Endothelial cell of umbilical vein (primary cell): ENCODE measurements at regions of chr12 and their contacts with region 1.

Region 1: GRCh38 chr12:52884526-52885293 is 20.2 kb downstream of the KRT8 start:
- DNase-seq: peak; percentile 60
- H3K4me3 ChIP-seq: no peak overlapping the region
- H3K27ac ChIP-seq: no peak overlapping the region
- H3K4me1 ChIP-seq: no peaks in the 10 kb centered on the region
- H3K27me3 ChIP-seq: no peaks in the 10 kb centered on the region
- CTCF ChIP-seq: peak; percentile 89 to 92
- POLR2A ChIP-seq: no peak

Region 2: DNA sequence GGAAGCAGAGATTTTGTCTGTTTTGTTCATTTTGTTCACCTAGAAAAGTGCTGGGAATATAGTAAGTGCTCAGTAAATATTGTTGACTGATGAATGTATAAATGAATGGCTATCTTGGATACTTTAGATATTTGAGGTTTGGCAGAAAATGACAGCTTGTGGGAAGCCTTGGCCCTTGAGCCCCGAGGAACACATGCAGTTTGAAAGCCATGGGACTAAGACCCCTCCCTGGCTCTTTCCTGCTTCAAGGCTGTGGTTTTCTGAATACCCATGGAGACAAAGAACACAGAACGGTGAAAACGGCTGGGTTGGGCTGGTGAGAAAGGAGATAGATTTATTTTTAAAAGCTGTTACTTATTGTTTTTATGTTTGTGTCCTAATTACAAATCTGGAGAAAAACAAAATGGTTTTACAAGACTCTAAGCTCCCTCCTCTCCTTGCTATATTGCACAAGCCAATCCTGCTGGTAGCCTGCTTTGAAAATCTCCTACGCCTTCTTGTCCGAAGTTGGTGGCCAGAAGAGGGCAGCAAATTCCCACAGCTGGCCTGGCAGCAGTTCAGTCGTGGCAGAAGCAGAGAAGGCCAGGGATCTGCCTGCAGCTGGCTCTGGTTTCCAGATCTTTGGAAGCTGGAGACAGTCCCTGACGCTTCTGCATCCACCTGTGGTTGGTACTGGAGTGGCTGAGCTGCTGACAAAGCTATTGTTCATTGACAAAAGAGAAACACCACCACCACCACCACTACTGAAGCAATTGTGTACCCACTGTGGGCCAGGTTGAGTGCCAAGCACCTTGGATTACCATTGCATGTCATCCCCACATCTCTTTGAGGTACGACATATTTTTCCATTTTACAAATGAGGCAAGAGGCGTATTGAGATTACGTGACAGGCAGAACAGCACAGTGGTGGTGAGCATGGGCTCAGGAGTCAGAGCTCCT is 512.2 kb before region 1 on chr12:
- CTCF ChIA-PET with region 1: interaction called, 126 read pairs
- POLR2A ChIA-PET with region 1: no interaction called
- dilution Hi-C with region 1: no loop called
- intact Hi-C with region 1: loop called (anchors 1 kb)
- DNase-seq: peak; percentile 73
- H3K4me3 ChIP-seq: no peak overlapping the region
- H3K27ac ChIP-seq: no peak overlapping the region
- H3K4me1 ChIP-seq: no peaks in the 10 kb centered on the region
- H3K27me3 ChIP-seq: peaks cover 13 to 19% of the 10 kb centered on the region in 2 experiments
- CTCF ChIP-seq: peak; percentile 69 to 77
- POLR2A ChIP-seq: no peak

Region 3: DNA sequence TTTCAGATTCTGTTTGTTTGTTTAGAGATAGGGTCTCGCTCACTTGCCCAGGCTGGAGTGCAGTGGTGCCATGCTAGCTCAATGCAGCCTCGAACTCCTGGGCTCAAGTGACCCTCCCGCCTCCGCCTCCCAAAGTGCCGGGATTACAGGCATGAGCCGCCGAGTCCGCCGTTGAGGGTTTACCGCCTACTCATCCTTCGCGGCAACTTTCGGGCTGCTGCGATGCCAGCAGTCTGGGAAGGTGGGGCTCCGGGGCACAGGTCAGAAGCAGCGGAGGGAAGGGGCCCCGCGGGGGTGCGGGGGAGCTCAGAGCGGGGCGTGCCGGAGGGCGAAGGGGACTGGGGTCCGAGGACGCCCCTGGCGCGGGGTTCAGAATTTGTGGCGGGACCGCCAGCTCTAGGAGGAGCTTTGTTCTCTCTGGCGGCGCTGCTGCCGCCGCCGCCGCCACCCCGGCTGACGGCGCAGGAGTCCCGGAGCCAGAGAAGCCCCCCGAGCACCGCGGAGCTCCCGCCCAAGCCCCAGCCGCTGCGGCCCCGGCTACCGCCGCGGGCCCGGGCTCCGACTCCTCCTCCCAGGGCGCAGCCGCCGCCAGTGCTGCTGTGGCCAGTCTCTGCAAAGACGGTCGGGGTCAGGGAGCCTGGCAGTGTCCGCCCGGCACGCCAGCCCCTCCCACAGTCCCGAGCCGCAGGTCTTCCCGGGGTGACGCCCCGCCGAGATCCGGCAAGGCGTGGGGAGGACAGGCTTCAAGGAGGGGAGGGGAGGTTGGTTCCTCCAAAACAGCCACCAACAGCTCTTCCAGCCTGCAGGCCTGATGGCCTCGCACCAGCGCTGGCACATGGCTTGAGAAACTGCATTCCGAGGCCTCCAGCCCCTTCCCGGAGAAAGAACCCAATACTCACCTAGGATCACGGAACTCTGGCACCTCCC is 170.5 kb before region 1 on chr12:
- CTCF ChIA-PET with region 1: no interaction called
- POLR2A ChIA-PET with region 1: no interaction called
- dilution Hi-C with region 1: no loop called
- intact Hi-C with region 1: no loop called
- DNase-seq: no peak
- H3K4me3 ChIP-seq: no peak overlapping the region
- H3K27ac ChIP-seq: no peak overlapping the region
- H3K4me1 ChIP-seq: no peaks in the 10 kb centered on the region
- H3K27me3 ChIP-seq: peaks cover 24 to 30% of the 10 kb centered on the region in 2 experiments
- CTCF ChIP-seq: no peak
- POLR2A ChIP-seq: no peak

Region 4: DNA sequence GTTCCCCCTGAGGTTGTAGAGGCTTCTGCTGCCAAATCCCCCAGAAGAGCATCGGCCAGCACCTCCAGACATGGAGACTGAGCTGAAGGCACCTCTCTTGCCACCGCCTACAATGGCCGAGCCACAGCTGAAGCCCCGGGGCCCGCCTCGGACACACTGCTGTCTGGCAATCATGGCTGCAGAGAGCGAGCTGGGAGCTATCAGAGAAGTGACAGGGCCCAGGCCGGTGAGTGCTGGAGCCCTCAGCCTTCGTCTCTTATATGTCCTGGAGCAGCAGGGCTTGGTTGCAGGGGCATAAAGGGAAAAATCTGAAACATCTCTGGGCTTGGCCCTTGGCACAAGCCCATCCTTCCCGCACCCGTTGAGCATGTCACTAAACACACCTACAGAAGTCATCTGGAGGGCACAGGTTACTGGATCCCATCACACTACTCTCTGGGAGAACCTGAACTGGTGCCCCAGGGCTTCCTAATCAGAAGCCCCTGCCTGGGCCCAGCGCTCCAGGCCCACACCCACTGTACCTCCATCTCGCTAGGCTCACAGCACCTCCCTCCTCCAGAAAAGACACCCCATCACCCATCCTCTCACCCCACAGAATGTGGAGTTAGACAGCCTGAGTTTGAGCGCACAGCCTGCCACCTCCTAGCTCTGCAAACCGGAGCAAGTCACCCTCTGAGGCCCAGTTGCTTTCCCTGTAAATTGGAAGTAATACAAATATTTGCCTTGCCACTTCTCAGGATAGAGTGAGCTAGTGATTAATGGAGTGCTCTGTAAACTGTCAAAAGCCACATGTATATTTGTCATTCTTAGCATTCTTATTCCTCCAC is 70.6 kb before region 1 on chr12 and contains the start of gene KRT4:
- CTCF ChIA-PET with region 1: no interaction called
- POLR2A ChIA-PET with region 1: no interaction called
- dilution Hi-C with region 1: no loop called
- intact Hi-C with region 1: no loop called
- DNase-seq: no peak
- H3K4me3 ChIP-seq: no peak within 1 kb of the TSS
- H3K27ac ChIP-seq: no peak within 1 kb of the TSS
- H3K4me1 ChIP-seq: no peaks in the 10 kb centered on the region
- H3K27me3 ChIP-seq: no peaks in the 10 kb centered on the region
- CTCF ChIP-seq: no peak
- POLR2A ChIP-seq: no peak
- total RNA-seq, gene KRT4: not detected in 2 replicates

Region 5: DNA sequence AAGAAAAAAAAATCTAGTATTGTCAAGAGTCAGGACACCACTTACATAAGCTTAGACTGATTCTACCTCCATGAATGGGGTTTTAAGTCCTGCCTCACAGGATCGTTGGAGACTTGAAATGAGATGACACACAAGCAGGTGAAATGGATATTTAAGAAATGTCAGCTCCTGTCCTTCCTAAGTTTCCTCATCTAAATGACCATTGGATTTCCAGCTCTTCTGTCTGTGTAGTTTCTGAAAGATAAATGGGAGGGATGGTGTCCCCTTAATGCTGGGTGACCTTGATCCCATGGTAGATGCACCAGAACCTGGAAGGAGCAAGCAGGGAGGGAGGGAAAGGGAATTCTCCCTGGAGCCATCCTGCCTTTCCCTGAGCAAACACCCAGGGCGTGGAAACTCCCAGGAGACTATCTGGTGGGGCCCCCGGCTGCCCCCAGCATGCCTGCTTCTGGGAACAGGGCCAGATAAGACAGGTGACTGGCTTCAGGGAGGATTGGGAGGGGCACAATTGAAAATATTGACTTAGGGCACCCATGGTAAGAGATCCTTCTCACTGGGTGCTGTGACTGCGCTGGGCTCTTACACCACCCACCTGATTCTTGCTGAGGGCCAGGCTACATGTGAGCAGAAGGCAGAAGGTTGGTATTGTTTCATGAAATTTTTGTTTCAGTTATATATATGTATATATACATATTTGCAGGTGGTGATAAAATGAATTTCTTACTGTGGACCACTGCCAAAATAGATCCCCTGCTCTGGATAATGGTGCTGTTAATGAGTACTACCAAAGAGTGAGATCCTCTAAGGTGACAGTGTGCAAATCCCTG is 10.6 kb after region 1 on chr12:
- CTCF ChIA-PET with region 1: interaction called, 72 read pairs
- POLR2A ChIA-PET with region 1: no interaction called
- dilution Hi-C with region 1: no loop called
- intact Hi-C with region 1: no loop called
- DNase-seq: no peak
- H3K4me3 ChIP-seq: no peak overlapping the region
- H3K27ac ChIP-seq: no peak overlapping the region
- H3K4me1 ChIP-seq: no peaks in the 10 kb centered on the region
- H3K27me3 ChIP-seq: no peaks in the 10 kb centered on the region
- CTCF ChIP-seq: no peak
- POLR2A ChIP-seq: no peak

Region 6: GRCh38 chr12:52924764-52925716 is 40.3 kb after region 1 on chr12:
- CTCF ChIA-PET with region 1: interaction called, 54 read pairs
- POLR2A ChIA-PET with region 1: interaction called, 3 read pairs
- dilution Hi-C with region 1: no loop called
- intact Hi-C with region 1: loop called (anchors 1 kb)
- DNase-seq: peak; percentile 91
- H3K4me3 ChIP-seq: no peak overlapping the region
- H3K27ac ChIP-seq: peak overlapping the region; percentile 96
- H3K4me1 ChIP-seq: peaks cover 42% of the 10 kb centered on the region
- H3K27me3 ChIP-seq: no peaks in the 10 kb centered on the region
- CTCF ChIP-seq: no peak
- POLR2A ChIP-seq: peak; percentile 76

Region 7: GRCh38 chr12:52949413-52950331 is 65.0 kb after region 1 on chr12:
- CTCF ChIA-PET with region 1: interaction called, 76 read pairs
- POLR2A ChIA-PET with region 1: no interaction called
- dilution Hi-C with region 1: no loop called
- intact Hi-C with region 1: loop called (anchors 1 kb)
- DNase-seq: peak; percentile 96
- H3K4me3 ChIP-seq: peak overlapping the region; percentile 67 to 93 (median 74)
- H3K27ac ChIP-seq: peak overlapping the region; percentile 91
- H3K4me1 ChIP-seq: peaks cover 37% of the 10 kb centered on the region
- H3K27me3 ChIP-seq: no peaks in the 10 kb centered on the region
- CTCF ChIP-seq: no peak
- POLR2A ChIP-seq: no peak

Region 8: DNA sequence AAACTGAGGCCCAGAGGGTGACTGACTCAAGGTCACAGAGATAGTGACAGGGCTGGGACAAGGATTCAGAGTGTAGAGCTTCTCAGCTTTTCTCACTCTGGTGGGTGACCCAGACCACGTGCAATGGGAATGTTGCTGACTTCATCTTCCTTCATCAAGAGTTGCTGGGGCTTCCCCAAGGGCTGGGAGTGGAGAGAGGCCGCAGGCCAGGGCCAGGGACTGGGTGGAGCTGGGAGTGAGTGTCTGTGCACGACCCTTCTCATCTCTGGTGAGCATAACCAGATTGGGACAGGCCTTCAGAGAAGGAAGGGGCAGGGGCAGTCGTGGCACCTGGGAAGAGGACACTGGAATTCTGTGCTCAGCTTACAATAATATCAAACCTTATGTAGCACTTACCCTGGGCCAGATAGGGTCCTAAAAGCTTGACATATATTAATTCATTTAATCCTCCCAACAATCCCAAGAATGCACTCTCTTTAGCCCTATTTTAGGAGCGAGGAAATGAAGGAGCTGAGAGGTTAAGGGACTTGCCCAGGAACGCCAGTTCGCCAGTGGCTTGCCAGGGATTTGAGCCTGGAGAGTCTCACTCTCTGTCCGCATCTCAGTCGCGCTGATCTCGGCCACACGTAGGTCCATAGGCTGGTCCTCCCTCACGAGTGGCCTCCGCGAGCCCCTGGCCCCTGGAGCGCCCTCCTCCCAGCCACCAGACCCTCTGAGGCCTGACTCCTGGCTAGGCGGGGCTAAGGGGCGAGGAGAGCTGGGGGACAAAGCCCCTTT is 80.0 kb after region 1 on chr12:
- CTCF ChIA-PET with region 1: interaction called, 23 read pairs
- POLR2A ChIA-PET with region 1: no interaction called
- dilution Hi-C with region 1: no loop called
- intact Hi-C with region 1: no loop called
- DNase-seq: no peak
- H3K4me3 ChIP-seq: peak overlapping the region in 1 of 3 experiments; percentile 20
- H3K27ac ChIP-seq: no peak overlapping the region
- H3K4me1 ChIP-seq: no peaks in the 10 kb centered on the region
- H3K27me3 ChIP-seq: no peaks in the 10 kb centered on the region
- CTCF ChIP-seq: no peak
- POLR2A ChIP-seq: no peak

Region 9: DNA sequence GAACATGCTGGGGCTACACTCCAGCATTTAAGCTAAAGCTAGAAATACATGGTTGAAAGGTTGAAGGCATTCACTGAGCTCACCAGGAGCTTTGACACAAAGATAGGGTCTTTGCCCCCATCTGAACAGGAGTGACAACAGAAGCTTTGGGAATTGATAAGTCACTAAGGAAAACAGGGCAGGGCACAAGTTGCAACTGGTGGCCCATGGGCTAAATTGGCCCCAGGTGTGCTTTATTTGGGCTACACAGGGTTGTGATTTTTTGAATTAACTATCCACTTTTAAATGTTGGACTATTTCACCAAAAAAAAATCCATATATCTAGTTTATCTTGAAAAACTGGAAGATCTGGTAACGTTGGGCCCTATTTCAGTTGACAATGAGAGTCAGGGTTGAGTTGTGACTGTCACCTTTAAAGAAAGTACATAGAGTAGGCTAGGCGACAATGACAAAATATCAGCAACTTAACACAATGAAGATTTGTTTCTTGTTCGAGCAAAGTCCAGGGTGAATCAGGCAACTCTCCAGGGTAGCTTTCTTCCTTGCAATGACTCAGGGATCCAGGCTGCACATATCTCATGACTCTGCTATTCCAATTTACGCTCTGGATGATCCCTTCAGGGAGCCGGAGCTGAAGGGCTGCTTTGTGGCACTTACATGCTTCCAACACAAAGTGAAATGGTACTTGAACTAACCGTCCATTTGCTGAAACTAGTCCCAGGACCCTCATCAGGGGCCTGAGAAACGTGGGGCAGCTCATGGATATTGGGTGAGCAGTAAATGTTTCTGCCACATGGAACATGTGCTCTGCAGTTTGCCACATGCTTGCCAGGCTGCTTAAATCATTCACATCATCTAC is 108.2 kb after region 1 on chr12:
- CTCF ChIA-PET with region 1: interaction called, 921 read pairs
- POLR2A ChIA-PET with region 1: no interaction called
- dilution Hi-C with region 1: loop called (anchors 25 kb)
- intact Hi-C with region 1: no loop called
- DNase-seq: no peak
- H3K4me3 ChIP-seq: no peak overlapping the region
- H3K27ac ChIP-seq: no peak overlapping the region
- H3K4me1 ChIP-seq: no peaks in the 10 kb centered on the region
- H3K27me3 ChIP-seq: peaks cover 0 to 2% of the 10 kb centered on the region in 2 experiments
- CTCF ChIP-seq: no peak
- POLR2A ChIP-seq: no peak